Activated B cell treated with CpG ODN at 0.5 μM for 24 hours (primary cell): ENCODE measurements at regions of chr1 and their contacts with region 1.

Region 1: DNA sequence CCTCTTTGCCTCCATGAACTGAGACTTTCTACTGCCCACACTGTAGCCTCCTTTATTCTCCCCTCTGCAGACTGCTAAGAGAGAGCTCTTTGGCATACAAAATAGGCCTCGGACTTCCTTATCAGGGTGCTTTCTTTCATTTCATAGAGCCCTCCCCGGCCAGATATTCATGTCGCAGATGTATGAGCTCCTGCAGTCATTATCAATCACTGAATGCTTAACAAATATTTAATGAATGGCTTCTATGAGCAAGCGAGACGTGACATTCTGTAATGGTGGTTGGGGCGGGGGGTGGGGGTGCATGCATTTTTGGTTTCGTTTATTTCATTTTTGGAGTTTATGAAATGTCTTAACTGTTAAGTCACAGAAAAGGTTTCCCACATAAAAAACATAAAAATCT is 344.8 kb upstream of the KAZN start:
- DNase-seq: no peak
- ATAC-seq: no peak
- H3K4me3 Mint-ChIP-seq: no peak overlapping the region
- H3K27ac Mint-ChIP-seq: no peak overlapping the region
- H3K4me1 Mint-ChIP-seq: peaks cover 24% of the 10 kb centered on the region
- H3K27me3 Mint-ChIP-seq: peaks cover 6% of the 10 kb centered on the region
- CTCF ChIP-seq: no peak

Region 2: DNA sequence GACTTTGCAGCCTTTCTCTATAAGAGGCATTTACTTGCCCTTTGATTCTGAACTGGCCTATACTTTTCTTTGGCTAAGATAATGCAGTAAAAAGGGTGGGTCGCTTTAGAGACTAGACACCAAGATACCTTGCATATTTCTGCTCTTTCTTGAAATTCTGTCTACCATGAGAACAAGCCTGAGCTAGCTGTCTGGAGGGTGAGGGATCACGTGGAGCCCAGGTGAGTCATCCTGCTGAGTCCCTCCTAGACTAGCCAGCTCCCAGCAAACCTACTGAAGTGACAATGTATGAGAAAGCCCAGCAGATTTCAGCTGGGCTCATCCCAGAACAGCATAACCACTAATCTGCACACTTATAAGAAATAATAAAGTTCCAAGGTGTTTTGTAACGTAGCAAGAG is 63.2 kb before region 1 on chr1:
- CTCF ChIA-PET with region 1: no interaction called
- POLR2A ChIA-PET with region 1: no interaction called
- intact Hi-C with region 1: no loop called
- DNase-seq: no peak
- ATAC-seq: no peak
- H3K4me3 Mint-ChIP-seq: no peak overlapping the region
- H3K27ac Mint-ChIP-seq: no peak overlapping the region
- H3K4me1 Mint-ChIP-seq: no peaks in the 10 kb centered on the region
- H3K27me3 Mint-ChIP-seq: peaks cover 2% of the 10 kb centered on the region
- CTCF ChIP-seq: no peak

Region 3: DNA sequence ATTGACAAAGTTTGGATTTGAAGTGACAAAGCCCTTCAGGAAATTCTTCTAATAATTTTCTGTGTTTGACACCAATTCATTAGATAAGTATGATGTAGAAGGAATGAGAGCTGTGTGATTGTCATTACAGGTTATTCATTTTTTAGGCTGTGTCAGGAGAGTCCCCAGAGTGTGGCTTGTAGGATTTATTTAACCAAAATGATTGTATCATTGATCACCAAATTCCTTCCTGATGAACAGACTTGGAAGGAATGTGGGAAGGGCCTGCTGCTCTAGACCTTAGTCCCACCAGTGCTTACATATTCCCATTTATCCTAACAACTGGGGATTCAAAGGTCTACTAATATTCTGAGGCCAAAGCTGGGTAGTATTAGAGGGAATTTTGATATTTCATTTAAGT is 38.5 kb before region 1 on chr1:
- CTCF ChIA-PET with region 1: no interaction called
- POLR2A ChIA-PET with region 1: interaction called, 13 read pairs
- intact Hi-C with region 1: no loop called
- DNase-seq: no peak
- ATAC-seq: no peak
- H3K4me3 Mint-ChIP-seq: no peak overlapping the region
- H3K27ac Mint-ChIP-seq: no peak overlapping the region
- H3K4me1 Mint-ChIP-seq: no peaks in the 10 kb centered on the region
- H3K27me3 Mint-ChIP-seq: peaks cover 2% of the 10 kb centered on the region
- CTCF ChIP-seq: no peak

Region 4: GRCh38 chr1:14380408-14380807 is 126.7 kb after region 1 on chr1:
- CTCF ChIA-PET with region 1: no interaction called
- POLR2A ChIA-PET with region 1: no interaction called
- intact Hi-C with region 1: no loop called
- DNase-seq: no peak
- ATAC-seq: no peak
- H3K4me3 Mint-ChIP-seq: no peak overlapping the region
- H3K27ac Mint-ChIP-seq: no peak overlapping the region
- H3K4me1 Mint-ChIP-seq: no peaks in the 10 kb centered on the region
- H3K27me3 Mint-ChIP-seq: no peaks in the 10 kb centered on the region
- CTCF ChIP-seq: no peak